Mammary epithelial cell (primary cell): ENCODE measurements at regions of chr17 and their contacts with region 1.

Region 1: GRCh38 chr17:72362376-72363088 is 241.7 kb downstream of the SOX9 start:
- DNase-seq: peak; percentile 98
- H3K4me3 ChIP-seq: no peak overlapping the region
- H3K27ac ChIP-seq: peak overlapping the region; percentile 89
- H3K4me1 ChIP-seq: peaks cover 47% of the 10 kb centered on the region
- H3K27me3 ChIP-seq: no peaks in the 10 kb centered on the region
- CTCF ChIP-seq: no peak

Region 2: GRCh38 chr17:72392056-72393010 is 29.8 kb after region 1 on chr17:
- CTCF ChIA-PET with region 1: no interaction called
- dilution Hi-C with region 1: no loop called
- in situ Hi-C with region 1: no loop called
- intact Hi-C with region 1: loop called (anchors 1 kb)
- DNase-seq: no peak
- H3K4me3 ChIP-seq: no peak overlapping the region
- H3K27ac ChIP-seq: peak overlapping the region; percentile 76
- H3K4me1 ChIP-seq: peaks cover 68% of the 10 kb centered on the region
- H3K27me3 ChIP-seq: no peaks in the 10 kb centered on the region
- CTCF ChIP-seq: no peak

Region 3: DNA sequence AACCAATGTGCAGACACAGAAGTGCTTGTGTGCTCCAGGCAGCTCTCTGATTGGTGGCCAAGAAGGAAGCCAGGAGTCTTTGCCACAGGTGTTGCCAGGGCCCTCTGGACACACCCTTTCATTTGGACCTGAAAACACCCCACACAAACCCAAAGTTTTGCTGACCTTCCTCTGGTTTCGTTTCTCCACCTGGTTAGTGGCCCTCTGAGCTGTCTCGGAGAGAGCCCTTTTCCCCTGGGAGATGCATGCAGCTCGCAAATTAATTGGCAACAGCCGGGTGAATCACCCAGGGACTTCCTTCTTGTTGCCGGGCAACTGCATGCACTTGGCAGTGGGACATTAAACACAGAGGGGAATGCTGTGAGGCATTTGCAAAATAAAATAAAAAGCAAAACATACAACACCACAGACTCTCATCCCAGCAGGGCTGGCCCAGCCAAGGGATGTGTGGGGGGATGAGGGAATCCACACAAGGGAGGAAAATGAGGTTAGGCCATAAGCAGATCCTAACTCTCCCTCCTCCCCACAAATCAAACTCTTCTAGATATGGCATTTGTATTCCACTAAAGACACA is 44.9 kb after region 1 on chr17:
- CTCF ChIA-PET with region 1: no interaction called
- dilution Hi-C with region 1: no loop called
- in situ Hi-C with region 1: no loop called
- intact Hi-C with region 1: loop called (anchors 1 kb)
- DNase-seq: peak; percentile 98
- H3K4me3 ChIP-seq: no peak overlapping the region
- H3K27ac ChIP-seq: peak overlapping the region; percentile 92
- H3K4me1 ChIP-seq: peaks cover 52% of the 10 kb centered on the region
- H3K27me3 ChIP-seq: no peaks in the 10 kb centered on the region
- CTCF ChIP-seq: no peak

Region 4: DNA sequence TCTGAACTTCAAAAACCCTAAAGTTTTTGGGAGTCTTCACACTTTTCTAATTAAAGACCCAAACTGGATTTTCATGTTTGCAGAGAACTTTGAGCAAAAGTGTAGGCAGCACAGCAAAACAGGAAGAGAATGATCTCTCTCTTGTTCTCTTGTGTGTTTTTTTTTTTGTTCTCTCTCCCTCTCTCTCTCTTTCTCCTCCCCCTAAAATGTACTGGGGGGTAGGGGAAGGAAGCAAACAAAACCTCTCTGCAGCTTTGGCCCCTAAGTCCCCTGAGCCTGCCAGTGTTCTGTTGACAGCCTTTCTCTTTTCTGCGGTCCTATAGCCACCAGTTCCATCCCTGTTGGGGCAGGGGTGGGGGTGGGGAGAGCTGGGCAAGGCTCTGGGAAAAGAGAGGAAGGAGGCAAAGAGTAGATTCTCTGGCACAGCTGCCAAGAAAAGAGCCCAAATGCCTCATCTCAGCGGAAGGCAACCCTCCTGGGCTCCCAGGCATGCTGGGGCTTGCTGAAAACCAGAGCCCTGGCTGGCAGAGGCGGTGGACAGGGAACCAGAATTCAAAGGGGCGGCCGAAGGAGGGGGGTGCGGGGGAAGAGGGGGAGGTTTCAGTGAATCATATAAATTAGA is 53.6 kb after region 1 on chr17:
- CTCF ChIA-PET with region 1: no interaction called
- dilution Hi-C with region 1: no loop called
- in situ Hi-C with region 1: no loop called
- intact Hi-C with region 1: loop called (anchors 1 kb)
- DNase-seq: peak; percentile 96
- H3K4me3 ChIP-seq: no peak overlapping the region
- H3K27ac ChIP-seq: peak overlapping the region; percentile 79
- H3K4me1 ChIP-seq: peaks cover 51% of the 10 kb centered on the region
- H3K27me3 ChIP-seq: no peaks in the 10 kb centered on the region
- CTCF ChIP-seq: no peak

Region 5: GRCh38 chr17:72421128-72422092 is 58.9 kb after region 1 on chr17:
- CTCF ChIA-PET with region 1: no interaction called
- dilution Hi-C with region 1: no loop called
- in situ Hi-C with region 1: no loop called
- intact Hi-C with region 1: loop called (anchors 1 kb)
- DNase-seq: peak; percentile 98
- H3K4me3 ChIP-seq: no peak overlapping the region
- H3K27ac ChIP-seq: peak overlapping the region; percentile 92
- H3K4me1 ChIP-seq: peaks cover 52% of the 10 kb centered on the region
- H3K27me3 ChIP-seq: no peaks in the 10 kb centered on the region
- CTCF ChIP-seq: no peak

Region 6: GRCh38 chr17:72465191-72466024 is 102.9 kb after region 1 on chr17:
- CTCF ChIA-PET with region 1: no interaction called
- dilution Hi-C with region 1: no loop called
- in situ Hi-C with region 1: loop called in 1 of 2 experiments (anchors 5 kb)
- intact Hi-C with region 1: loop called (anchors 2 kb)
- DNase-seq: peak; percentile 99
- H3K4me3 ChIP-seq: peak overlapping the region in 1 of 3 experiments; percentile 2
- H3K27ac ChIP-seq: peak overlapping the region; percentile 98
- H3K4me1 ChIP-seq: peaks cover 64% of the 10 kb centered on the region
- H3K27me3 ChIP-seq: no peaks in the 10 kb centered on the region
- CTCF ChIP-seq: no peak

Region 7: DNA sequence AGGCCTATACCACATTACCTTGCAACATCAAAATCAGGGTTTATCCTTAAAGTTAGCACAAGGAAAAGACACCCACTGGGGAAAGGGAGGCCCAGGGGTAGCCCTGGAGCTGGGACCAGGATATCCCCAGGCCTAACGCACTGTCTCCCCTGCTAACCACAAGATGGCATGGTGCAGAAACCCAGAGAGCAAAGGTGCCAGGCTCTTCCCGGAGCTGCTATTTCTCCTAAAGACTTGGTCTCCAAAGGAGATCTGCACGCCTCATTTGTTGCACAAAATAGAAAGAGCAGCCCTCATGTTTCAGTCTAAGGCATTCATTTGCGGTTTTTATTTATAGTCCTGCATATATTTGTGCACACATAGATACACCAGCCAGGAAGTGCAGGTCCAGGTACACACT is 166.9 kb after region 1 on chr17:
- CTCF ChIA-PET with region 1: no interaction called
- dilution Hi-C with region 1: no loop called
- in situ Hi-C with region 1: no loop called
- intact Hi-C with region 1: no loop called
- DNase-seq: no peak
- H3K4me3 ChIP-seq: no peak overlapping the region
- H3K27ac ChIP-seq: no peak overlapping the region
- H3K4me1 ChIP-seq: no peaks in the 10 kb centered on the region
- H3K27me3 ChIP-seq: no peaks in the 10 kb centered on the region
- CTCF ChIP-seq: no peak

Region 8: GRCh38 chr17:72618001-72618509 is 255.5 kb after region 1 on chr17:
- CTCF ChIA-PET with region 1: no interaction called
- dilution Hi-C with region 1: no loop called
- in situ Hi-C with region 1: no loop called
- intact Hi-C with region 1: no loop called
- DNase-seq: no peak
- H3K4me3 ChIP-seq: no peak overlapping the region
- H3K27ac ChIP-seq: no peak overlapping the region
- H3K4me1 ChIP-seq: peaks cover 52% of the 10 kb centered on the region
- H3K27me3 ChIP-seq: no peaks in the 10 kb centered on the region
- CTCF ChIP-seq: no peak

Region 9: GRCh38 chr17:72901083-72901482 is 538.6 kb after region 1 on chr17:
- CTCF ChIA-PET with region 1: no interaction called
- dilution Hi-C with region 1: no loop called
- in situ Hi-C with region 1: no loop called
- intact Hi-C with region 1: no loop called
- DNase-seq: no peak
- H3K4me3 ChIP-seq: no peak overlapping the region
- H3K27ac ChIP-seq: no peak overlapping the region
- H3K4me1 ChIP-seq: no peaks in the 10 kb centered on the region
- H3K27me3 ChIP-seq: no peaks in the 10 kb centered on the region
- CTCF ChIP-seq: no peak